Endothelial cell of umbilical vein (primary cell): ENCODE measurements at regions of chr3 and their contacts with region 1.

Region 1: GRCh38 chr3:43621656-43622432 is at the start of gene ANO10:
- DNase-seq: peak; percentile 99
- H3K4me3 ChIP-seq: peak within 1 kb of the TSS; percentile 75 to 83 (median 81)
- H3K27ac ChIP-seq: peak within 1 kb of the TSS; percentile 63
- H3K4me1 ChIP-seq: peaks cover 10% of the 10 kb centered on the region
- H3K27me3 ChIP-seq: no peaks in the 10 kb centered on the region
- CTCF ChIP-seq: no peak
- POLR2A ChIP-seq: peak; percentile 69
- total RNA-seq, gene ANO10: 40.9 and 45.8 TPM in 2 replicates

Region 2: GRCh38 chr3:43549626-43550290 is 72.1 kb before region 1 on chr3:
- CTCF ChIA-PET with region 1: no interaction called
- POLR2A ChIA-PET with region 1: no interaction called
- dilution Hi-C with region 1: no loop called
- intact Hi-C with region 1: loop called (anchors 5 kb)
- DNase-seq: no peak
- H3K4me3 ChIP-seq: no peak overlapping the region
- H3K27ac ChIP-seq: no peak overlapping the region
- H3K4me1 ChIP-seq: no peaks in the 10 kb centered on the region
- H3K27me3 ChIP-seq: no peaks in the 10 kb centered on the region
- CTCF ChIP-seq: no peak
- POLR2A ChIP-seq: no peak